ENCODE measurements at regions of chr11 and their contacts with region 1.

Region 1: GRCh38 chr11:32312865-32313403 is 122.4 kb downstream of the WT1 start:
- DNase-seq: peak; percentile 97
- H3K4me3 ChIP-seq: no peak overlapping the region
- H3K27ac ChIP-seq: no peak overlapping the region
- H3K4me1 ChIP-seq: peaks cover 9% of the 10 kb centered on the region
- H3K27me3 ChIP-seq: no peaks in the 10 kb centered on the region
- CTCF ChIP-seq: peak; percentile 100

Region 2: GRCh38 chr11:32262367-32262766 is 50.6 kb before region 1 on chr11:
- CTCF ChIA-PET with region 1: no interaction called
- POLR2A ChIA-PET with region 1: no interaction called
- intact Hi-C with region 1: no loop called
- DNase-seq: no peak
- H3K4me3 ChIP-seq: no peak overlapping the region
- H3K27ac ChIP-seq: no peak overlapping the region
- H3K4me1 ChIP-seq: peaks cover 7% of the 10 kb centered on the region
- H3K27me3 ChIP-seq: peaks cover 5% of the 10 kb centered on the region
- CTCF ChIP-seq: no peak

Region 3: GRCh38 chr11:32290783-32291182 is 22.2 kb before region 1 on chr11:
- CTCF ChIA-PET with region 1: no interaction called
- POLR2A ChIA-PET with region 1: interaction called, 3 read pairs
- intact Hi-C with region 1: loop called (anchors 2 kb)
- DNase-seq: no peak
- H3K4me3 ChIP-seq: no peak overlapping the region
- H3K27ac ChIP-seq: no peak overlapping the region
- H3K4me1 ChIP-seq: no peaks in the 10 kb centered on the region
- H3K27me3 ChIP-seq: peaks cover 15% of the 10 kb centered on the region
- CTCF ChIP-seq: no peak

Region 4: GRCh38 chr11:32302821-32303220 is 10.1 kb before region 1 on chr11:
- CTCF ChIA-PET with region 1: interaction called, 14 read pairs
- POLR2A ChIA-PET with region 1: no interaction called
- intact Hi-C with region 1: no loop called
- DNase-seq: no peak
- H3K4me3 ChIP-seq: no peak overlapping the region
- H3K27ac ChIP-seq: no peak overlapping the region
- H3K4me1 ChIP-seq: peaks cover 6% of the 10 kb centered on the region
- H3K27me3 ChIP-seq: no peaks in the 10 kb centered on the region
- CTCF ChIP-seq: no peak